Common myeloid progenitor, CD34-positive (primary cell): ENCODE measurements at regions of chr7 and their contacts with region 1.

Region 1: DNA sequence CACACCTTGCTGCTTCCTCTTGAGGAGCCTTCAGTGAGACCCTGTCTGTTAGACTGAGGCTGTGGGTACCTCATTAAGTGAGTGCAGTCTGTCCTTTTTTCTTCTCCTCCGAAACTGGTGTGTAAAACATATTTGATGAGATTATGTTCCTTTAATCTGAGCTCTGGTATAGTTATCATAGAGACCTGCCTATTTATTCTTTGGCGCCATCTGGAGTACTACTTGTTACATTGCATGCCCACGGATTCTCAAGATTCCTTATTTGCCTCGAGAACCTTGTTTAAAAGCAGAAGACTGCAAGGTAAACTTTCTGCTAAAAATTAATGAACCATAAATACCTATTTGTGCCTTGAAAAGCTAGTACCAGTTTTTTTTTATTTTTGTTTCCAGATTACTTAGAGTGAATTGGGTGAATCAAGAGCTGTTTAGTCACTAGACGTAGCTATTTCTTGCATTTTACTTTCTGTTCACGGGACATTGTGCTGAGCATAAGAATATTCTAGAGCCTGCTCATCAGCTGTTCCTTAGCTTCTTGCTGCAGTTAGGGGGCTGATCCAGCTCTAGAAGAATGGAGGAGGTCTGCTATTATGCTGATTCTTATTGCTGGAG is 16.9 kb upstream of the STMP1 start:
- DNase-seq: peak; percentile 52 to 75 (median 67)
- H3K4me3 ChIP-seq: peak overlapping the region in 1 of 7 experiments; percentile 6
- H3K27ac ChIP-seq: no peak overlapping the region
- H3K4me1 ChIP-seq: peaks cover 0 to 5% (median 1%) of the 10 kb centered on the region in 4 experiments
- H3K27me3 ChIP-seq: no peaks in the 10 kb centered on the region

Region 2: GRCh38 chr7:135281363-135281949 is 363.9 kb before region 1 on chr7:
- CTCF ChIA-PET with region 1: interaction called, 12 read pairs
- POLR2A ChIA-PET with region 1: interaction called, 3 read pairs
- DNase-seq: peak; percentile 89 to 94 (median 91)
- H3K4me3 ChIP-seq: no peak overlapping the region
- H3K27ac ChIP-seq: no peak overlapping the region
- H3K4me1 ChIP-seq: no peaks in the 10 kb centered on the region
- H3K27me3 ChIP-seq: peaks cover 0 to 2% (median 0%) of the 10 kb centered on the region in 5 experiments

Region 3: DNA sequence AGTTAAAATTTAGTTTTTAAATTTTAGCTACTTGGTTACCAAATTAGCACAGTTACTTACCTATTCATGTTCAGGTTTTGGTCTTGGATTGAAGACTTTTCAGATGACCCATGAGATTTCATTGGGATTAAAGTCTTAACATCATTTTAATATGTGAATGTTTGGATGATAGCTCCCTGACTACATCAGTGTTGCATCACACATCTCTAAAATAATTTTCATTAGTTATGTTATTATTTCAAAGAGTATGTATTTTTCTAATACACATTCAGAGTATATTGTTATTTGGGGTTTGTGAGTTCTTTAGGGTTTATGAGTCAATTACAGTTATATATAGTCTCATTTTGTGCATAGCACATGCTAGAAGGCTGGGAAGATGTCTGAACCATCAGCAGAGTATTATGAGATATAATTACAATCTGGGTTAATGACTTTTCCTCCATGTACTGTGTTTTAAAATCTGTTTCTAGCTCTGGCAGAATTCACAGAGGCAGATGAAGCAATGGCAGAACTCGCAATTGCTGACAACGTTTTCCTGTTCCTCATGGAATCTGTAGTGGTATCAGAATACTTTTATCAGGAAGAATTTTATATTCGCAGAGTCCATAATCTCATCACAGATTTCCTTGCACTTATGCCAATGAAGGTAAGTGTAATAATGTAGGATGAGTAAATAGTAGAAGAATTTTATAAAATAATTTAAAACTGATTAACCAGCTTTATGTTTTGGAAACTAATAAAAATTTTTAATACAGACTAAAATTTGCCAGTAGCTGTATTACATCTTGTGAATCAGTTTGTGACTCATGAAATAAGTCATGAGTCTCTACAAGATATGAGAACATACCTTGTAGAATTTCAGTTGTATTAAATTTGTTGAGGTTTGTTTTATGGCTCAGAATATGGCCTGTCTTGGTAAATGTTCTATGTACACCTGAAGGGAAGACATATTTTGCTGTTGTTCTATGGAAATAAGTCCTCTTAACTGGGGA is 60.7 kb before region 1 on chr7:
- CTCF ChIA-PET with region 1: interaction called, 10 read pairs
- POLR2A ChIA-PET with region 1: no interaction called
- DNase-seq: no peak
- H3K4me3 ChIP-seq: no peak overlapping the region
- H3K27ac ChIP-seq: no peak overlapping the region
- H3K4me1 ChIP-seq: no peaks in the 10 kb centered on the region
- H3K27me3 ChIP-seq: no peaks in the 10 kb centered on the region

Region 4: GRCh38 chr7:135616136-135616535 is 29.3 kb before region 1 on chr7:
- CTCF ChIA-PET with region 1: interaction called, 28 read pairs
- POLR2A ChIA-PET with region 1: no interaction called
- DNase-seq: no peak
- H3K4me3 ChIP-seq: no peak overlapping the region
- H3K27ac ChIP-seq: no peak overlapping the region
- H3K4me1 ChIP-seq: no peaks in the 10 kb centered on the region
- H3K27me3 ChIP-seq: no peaks in the 10 kb centered on the region

Region 5: GRCh38 chr7:135620980-135621850 is 24.2 kb before region 1 on chr7:
- CTCF ChIA-PET with region 1: interaction called, 28 read pairs
- POLR2A ChIA-PET with region 1: no interaction called
- DNase-seq: peak; percentile 68 to 83 (median 77)
- H3K4me3 ChIP-seq: no peak overlapping the region
- H3K27ac ChIP-seq: no peak overlapping the region
- H3K4me1 ChIP-seq: no peaks in the 10 kb centered on the region
- H3K27me3 ChIP-seq: no peaks in the 10 kb centered on the region

Region 6: DNA sequence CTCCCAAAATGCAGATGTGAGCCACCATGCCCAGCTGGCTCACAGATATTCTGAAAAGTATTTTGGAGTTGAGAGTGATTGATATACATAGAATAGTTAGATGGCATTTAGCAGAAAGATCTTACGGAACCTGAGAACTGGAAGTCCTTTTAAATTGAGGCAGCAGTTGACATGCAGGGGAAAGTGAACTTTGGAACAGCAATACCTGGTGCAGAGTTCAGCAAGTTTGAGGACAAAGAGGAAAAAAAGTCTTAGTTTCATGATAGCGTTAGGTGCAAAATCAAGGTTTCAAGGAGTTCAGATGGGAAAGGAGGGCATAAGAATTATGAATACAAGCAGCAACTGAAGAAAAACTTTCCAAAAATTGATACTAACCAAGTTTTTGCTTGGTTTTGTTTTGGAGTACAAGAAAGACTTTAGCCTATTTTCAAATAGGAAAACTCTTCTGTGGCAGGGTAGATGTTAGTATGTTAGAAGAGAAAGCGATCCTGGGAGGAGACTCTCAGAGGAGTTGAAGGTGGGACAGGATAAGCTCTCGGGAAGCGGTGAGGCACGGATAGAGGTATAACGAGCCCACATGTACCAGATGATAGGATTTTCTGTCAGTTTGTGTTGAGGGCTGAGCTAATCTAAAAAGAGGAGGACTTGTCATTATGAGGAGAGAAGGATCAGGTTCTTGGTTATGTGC is 11.1 kb before region 1 on chr7:
- CTCF ChIA-PET with region 1: interaction called, 16 read pairs
- POLR2A ChIA-PET with region 1: no interaction called
- DNase-seq: no peak
- H3K4me3 ChIP-seq: no peak overlapping the region
- H3K27ac ChIP-seq: no peak overlapping the region
- H3K4me1 ChIP-seq: no peaks in the 10 kb centered on the region
- H3K27me3 ChIP-seq: no peaks in the 10 kb centered on the region

Region 7: DNA sequence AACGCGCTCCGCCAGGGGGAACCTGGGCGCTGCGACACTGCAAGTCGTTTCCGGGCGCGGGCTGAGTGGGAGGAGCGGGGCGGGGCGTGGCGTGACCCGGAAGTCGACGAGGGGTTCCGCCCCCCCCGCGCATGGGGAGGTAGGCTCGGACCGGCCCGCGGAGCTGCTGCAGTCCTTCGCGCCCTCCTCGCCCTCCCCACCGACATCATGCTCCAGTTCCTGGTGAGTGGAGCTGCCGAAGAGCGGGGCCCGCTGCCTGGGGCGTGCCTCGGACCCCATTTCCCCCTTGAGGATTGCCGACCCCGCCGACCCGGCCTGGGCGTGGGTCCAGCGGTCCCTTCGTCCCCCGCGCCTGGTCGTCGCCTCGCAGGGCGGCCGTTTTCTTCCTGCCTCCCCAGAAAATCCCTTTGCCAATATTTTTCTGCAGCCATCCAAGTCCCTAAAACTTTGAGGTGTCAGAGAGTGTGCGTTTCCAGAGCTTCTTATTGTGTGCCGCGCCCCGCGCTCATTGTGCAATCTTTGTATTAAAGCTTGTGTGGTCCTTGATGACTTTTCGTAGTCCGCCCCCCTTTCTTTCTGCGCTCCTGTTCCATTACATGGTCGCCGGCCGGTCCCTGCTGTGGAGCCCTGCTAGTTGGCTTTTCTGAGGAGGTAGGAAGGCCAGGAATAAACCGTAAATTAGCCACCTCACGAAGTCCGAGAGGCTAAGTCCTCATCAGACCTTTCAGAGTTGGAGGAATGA is 17.1 kb after region 1 on chr7 and contains the start of gene STMP1:
- CTCF ChIA-PET with region 1: interaction called, 67 read pairs
- POLR2A ChIA-PET with region 1: no interaction called
- DNase-seq: peak; percentile 96 to 97 (median 97)
- H3K4me3 ChIP-seq: peak within 1 kb of the TSS; percentile 79 to 97 (median 96)
- H3K27ac ChIP-seq: peak within 1 kb of the TSS; percentile 86 to 91
- H3K4me1 ChIP-seq: peaks cover 24 to 59% (median 51%) of the 10 kb centered on the region in 4 experiments
- H3K27me3 ChIP-seq: no peaks in the 10 kb centered on the region

Region 8: GRCh38 chr7:135704074-135704473 is 58.7 kb after region 1 on chr7:
- CTCF ChIA-PET with region 1: no interaction called
- POLR2A ChIA-PET with region 1: no interaction called
- DNase-seq: no peak
- H3K4me3 ChIP-seq: no peak overlapping the region
- H3K27ac ChIP-seq: no peak overlapping the region
- H3K4me1 ChIP-seq: no peaks in the 10 kb centered on the region
- H3K27me3 ChIP-seq: no peaks in the 10 kb centered on the region

Region 9: DNA sequence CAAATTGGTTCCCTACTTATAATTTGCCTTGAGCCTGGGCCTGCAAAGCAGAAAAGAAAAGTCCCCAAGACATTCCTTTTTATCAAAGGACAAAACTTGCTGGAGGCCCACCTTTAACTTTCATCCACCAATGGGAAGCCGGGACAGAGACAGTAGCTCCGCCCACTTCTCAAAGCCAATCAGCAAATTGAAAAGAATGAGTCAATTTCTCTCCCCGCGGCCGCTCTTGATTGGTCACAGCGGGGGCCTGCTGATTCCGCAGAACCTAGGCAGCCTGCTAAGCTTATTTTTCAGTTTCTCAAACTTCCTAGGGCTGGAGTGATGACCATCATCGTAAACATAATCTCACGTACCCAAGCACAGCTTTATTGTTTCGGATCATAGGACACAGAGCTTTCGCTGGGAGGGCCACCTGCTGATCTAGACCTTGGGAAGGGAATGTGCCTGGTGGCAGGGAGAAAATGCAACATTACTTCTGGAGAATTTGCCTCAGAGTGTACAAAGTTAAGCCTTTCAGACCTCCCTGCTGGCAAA is 82.8 kb after region 1 on chr7 and contains the start of gene SLC13A4:
- CTCF ChIA-PET with region 1: no interaction called
- POLR2A ChIA-PET with region 1: no interaction called
- DNase-seq: no peak
- H3K4me3 ChIP-seq: no peak within 1 kb of the TSS
- H3K27ac ChIP-seq: no peak within 1 kb of the TSS
- H3K4me1 ChIP-seq: peaks cover 0 to 3% (median 1%) of the 10 kb centered on the region in 4 experiments
- H3K27me3 ChIP-seq: no peaks in the 10 kb centered on the region

Region 10: DNA sequence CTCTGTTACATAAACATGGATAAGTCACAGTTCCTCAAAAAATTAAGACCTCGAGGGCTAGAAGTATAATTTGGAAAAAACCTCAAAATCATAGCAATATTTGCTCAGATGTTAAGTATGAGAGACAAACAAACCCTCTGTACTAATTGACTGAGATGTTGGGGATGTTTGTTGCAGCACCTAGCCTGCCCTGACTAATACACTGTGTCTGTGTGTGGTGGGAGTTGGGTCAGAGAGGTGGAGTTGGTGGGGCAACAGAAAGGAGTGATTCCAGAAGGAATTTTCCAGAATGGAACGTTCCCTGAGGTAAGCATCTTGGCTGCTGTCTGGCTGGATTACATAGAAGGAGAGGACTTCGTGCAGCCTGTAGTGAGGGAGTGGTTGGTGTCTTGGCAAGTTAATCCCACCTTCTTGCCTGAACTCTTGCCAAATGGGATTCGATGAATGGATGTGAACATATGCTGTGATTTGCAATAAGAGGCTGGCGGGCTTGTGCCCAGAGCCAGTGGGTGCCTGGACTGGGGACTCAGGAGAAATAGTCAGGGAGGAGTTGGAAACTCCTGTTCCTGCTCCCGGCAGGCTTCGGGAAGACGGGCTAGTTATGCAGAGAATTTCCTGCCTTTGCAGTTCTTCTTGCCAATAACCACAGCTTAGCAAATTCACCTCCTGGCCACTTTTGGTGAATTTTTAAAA is 112.5 kb after region 1 on chr7:
- CTCF ChIA-PET with region 1: no interaction called
- POLR2A ChIA-PET with region 1: no interaction called
- DNase-seq: no peak
- H3K4me3 ChIP-seq: no peak overlapping the region
- H3K27ac ChIP-seq: no peak overlapping the region
- H3K4me1 ChIP-seq: peaks cover 0 to 5% (median 3%) of the 10 kb centered on the region in 4 experiments
- H3K27me3 ChIP-seq: no peaks in the 10 kb centered on the region

Region 11: GRCh38 chr7:135914346-135914745 is 268.9 kb after region 1 on chr7:
- CTCF ChIA-PET with region 1: no interaction called
- POLR2A ChIA-PET with region 1: no interaction called
- DNase-seq: no peak
- H3K4me3 ChIP-seq: no peak overlapping the region
- H3K27ac ChIP-seq: no peak overlapping the region
- H3K4me1 ChIP-seq: peaks cover 0 to 9% (median 3%) of the 10 kb centered on the region in 4 experiments
- H3K27me3 ChIP-seq: no peaks in the 10 kb centered on the region